ENCODE measurements at regions of chr3 and their contacts with region 1.

Region 1: DNA sequence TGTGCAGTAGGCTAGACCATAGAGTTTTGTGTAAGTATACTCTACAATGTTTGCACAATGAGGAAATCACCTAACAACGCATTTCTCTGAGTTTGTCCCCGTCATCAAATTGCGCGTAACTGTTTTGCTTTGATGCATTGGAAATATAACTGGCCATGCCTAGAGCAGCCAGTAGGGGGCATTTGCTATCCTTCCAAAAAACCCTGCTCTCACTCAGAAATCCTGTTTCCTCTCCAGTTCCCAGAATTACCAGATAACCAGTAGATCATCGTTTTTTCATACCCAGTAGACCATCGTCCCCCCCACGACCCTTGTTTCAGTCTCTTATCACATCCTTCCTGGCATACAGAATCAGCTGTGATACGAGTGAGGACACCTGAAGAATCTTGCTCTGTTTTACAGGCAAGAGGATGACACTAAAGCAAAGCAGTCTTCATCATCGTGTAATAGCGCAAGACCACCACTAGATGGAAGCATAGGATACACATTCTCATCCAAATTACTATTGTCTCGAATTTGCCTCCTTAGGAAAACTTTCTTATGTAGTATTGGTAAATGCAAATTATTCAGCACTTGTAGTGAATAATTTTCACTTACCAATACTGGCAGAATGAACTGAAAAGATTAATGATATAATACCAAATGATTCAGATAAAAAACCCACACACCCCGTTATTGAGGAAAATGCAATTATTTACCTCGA is 4.4 kb upstream of the GABRR3 start:
- DNase-seq: peak; percentile 67 to 82 (median 80)
- H3K4me3 ChIP-seq: peak overlapping the region in 2 of 3 experiments; percentile 45 to 60
- H3K4me3 Mint-ChIP-seq: peak overlapping the region; percentile 76 to 88
- H3K27ac ChIP-seq: no peak overlapping the region
- H3K27ac Mint-ChIP-seq: peak overlapping the region; percentile 47 to 92 (median 82)
- H3K4me1 ChIP-seq: no peaks in the 10 kb centered on the region
- H3K4me1 Mint-ChIP-seq: peaks cover 4% of the 10 kb centered on the region
- H3K27me3 ChIP-seq: peaks cover 3 to 7% of the 10 kb centered on the region in 2 donors
- H3K27me3 Mint-ChIP-seq: peaks cover 0 to 7% (median 4%) of the 10 kb centered on the region in 3 donors
- CTCF ChIP-seq: peak; percentile 98

Region 2: DNA sequence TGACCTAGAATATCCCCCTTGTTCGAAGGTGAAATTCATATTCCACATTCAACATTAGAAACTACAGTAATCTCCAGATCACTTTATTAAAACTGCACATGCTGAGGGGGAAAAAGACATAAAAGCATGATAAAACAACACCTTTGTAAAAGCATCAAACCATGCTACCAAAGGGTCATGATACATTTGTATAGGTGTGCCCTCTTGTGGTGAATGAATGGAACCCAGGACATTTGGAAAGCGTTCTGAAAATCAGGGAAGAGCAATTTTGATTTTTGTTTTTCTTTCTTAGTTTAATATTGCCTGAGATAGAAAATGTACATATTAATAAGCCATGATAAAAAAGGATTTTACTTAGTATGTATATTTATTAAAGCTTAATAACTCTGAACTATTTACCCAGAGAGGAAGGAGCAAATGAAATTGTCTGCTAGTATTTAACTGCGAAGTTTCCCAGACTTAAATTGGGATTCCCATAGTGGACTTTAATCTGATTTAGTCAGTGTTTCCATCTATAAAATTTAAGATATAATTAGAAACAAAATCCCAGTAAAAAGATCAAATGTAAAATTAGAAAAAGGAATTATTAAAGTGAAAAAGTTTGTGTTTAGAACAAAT is 380.7 kb before region 1 on chr3:
- intact Hi-C with region 1: no loop called
- DNase-seq: no peak
- H3K4me3 ChIP-seq: no peak overlapping the region
- H3K4me3 Mint-ChIP-seq: no peak overlapping the region
- H3K27ac ChIP-seq: no peak overlapping the region
- H3K27ac Mint-ChIP-seq: no peak overlapping the region
- H3K4me1 ChIP-seq: no peaks in the 10 kb centered on the region
- H3K4me1 Mint-ChIP-seq: no peaks in the 10 kb centered on the region
- H3K27me3 ChIP-seq: no peaks in the 10 kb centered on the region
- H3K27me3 Mint-ChIP-seq: no peaks in the 10 kb centered on the region
- CTCF ChIP-seq: no peak

Region 3: GRCh38 chr3:98329392-98330124 is 290.1 kb after region 1 on chr3:
- intact Hi-C with region 1: loop called (anchors 5 kb)
- DNase-seq: peak; percentile 9 to 49 (median 44)
- H3K4me3 ChIP-seq: no peak overlapping the region
- H3K4me3 Mint-ChIP-seq: no peak overlapping the region
- H3K27ac ChIP-seq: no peak overlapping the region
- H3K27ac Mint-ChIP-seq: no peak overlapping the region
- H3K4me1 ChIP-seq: no peaks in the 10 kb centered on the region
- H3K4me1 Mint-ChIP-seq: peaks cover 2% of the 10 kb centered on the region
- H3K27me3 ChIP-seq: no peaks in the 10 kb centered on the region
- H3K27me3 Mint-ChIP-seq: peaks cover 6 to 18% (median 16%) of the 10 kb centered on the region in 3 donors
- CTCF ChIP-seq: peak; percentile 70

Region 4: GRCh38 chr3:98343647-98344507 is 304.4 kb after region 1 on chr3:
- intact Hi-C with region 1: no loop called
- DNase-seq: peak in 2 of 3 donors; percentile 27
- H3K4me3 ChIP-seq: no peak overlapping the region
- H3K4me3 Mint-ChIP-seq: no peak overlapping the region
- H3K27ac ChIP-seq: no peak overlapping the region
- H3K27ac Mint-ChIP-seq: no peak overlapping the region
- H3K4me1 ChIP-seq: no peaks in the 10 kb centered on the region
- H3K4me1 Mint-ChIP-seq: peaks cover 7% of the 10 kb centered on the region
- H3K27me3 ChIP-seq: peaks cover 0 to 3% of the 10 kb centered on the region in 2 donors
- H3K27me3 Mint-ChIP-seq: peaks cover 3 to 7% (median 4%) of the 10 kb centered on the region in 3 donors
- CTCF ChIP-seq: peak; percentile 83